ENCODE measurements at regions of chr10 and their contacts with region 1.

Region 1: GRCh38 chr10:91923371-91924211 is at the start of gene BTAF1:
- DNase-seq: peak; percentile 95
- H3K4me3 ChIP-seq: peak within 1 kb of the TSS; percentile 76 to 90 (median 82)
- H3K27ac ChIP-seq: peak within 1 kb of the TSS; percentile 97
- H3K4me1 ChIP-seq: peaks cover 0 to 38% (median 22%) of the 10 kb centered on the region in 4 donors
- H3K27me3 ChIP-seq: no peaks in the 10 kb centered on the region
- CTCF ChIP-seq: no peak
- EP300 ChIP-seq: peak in 2 of 4 donors; percentile 19 to 48
- POLR2A ChIP-seq: peak; percentile 88
- total RNA-seq, gene BTAF1: 34.6 to 45.5 (median 35.3) TPM

Region 2: GRCh38 chr10:91797874-91798648 is 125.5 kb before region 1 on chr10 and contains the start of gene TNKS2:
- intact Hi-C with region 1: loop called (anchors 5 kb)
- DNase-seq: peak; percentile 96
- H3K4me3 ChIP-seq: peak within 1 kb of the TSS; percentile 74 to 97 (median 92)
- H3K27ac ChIP-seq: peak within 1 kb of the TSS; percentile 96 to 99 (median 98)
- H3K4me1 ChIP-seq: peaks cover 0 to 48% (median 41%) of the 10 kb centered on the region in 4 donors
- H3K27me3 ChIP-seq: no peaks in the 10 kb centered on the region
- CTCF ChIP-seq: no peak
- EP300 ChIP-seq: peak in 1 of 4 donors; percentile 26
- POLR2A ChIP-seq: peak; percentile 83 to 85
- total RNA-seq, gene TNKS2: 37.4 to 46.7 (median 40.5) TPM

Region 3: GRCh38 chr10:91864099-91864498 is 59.5 kb before region 1 on chr10:
- intact Hi-C with region 1: no loop called
- DNase-seq: no peak
- H3K4me3 ChIP-seq: no peak overlapping the region
- H3K27ac ChIP-seq: no peak overlapping the region
- H3K4me1 ChIP-seq: no peaks in the 10 kb centered on the region
- H3K27me3 ChIP-seq: no peaks in the 10 kb centered on the region
- CTCF ChIP-seq: no peak
- EP300 ChIP-seq: no peak
- POLR2A ChIP-seq: no peak

Measured in sigmoid colon (tissue), 7 donors.